Left ventricle myocardium superior (tissue), 1 donor: ENCODE measurements at regions of chr16 and their contacts with region 1.

Region 1: DNA sequence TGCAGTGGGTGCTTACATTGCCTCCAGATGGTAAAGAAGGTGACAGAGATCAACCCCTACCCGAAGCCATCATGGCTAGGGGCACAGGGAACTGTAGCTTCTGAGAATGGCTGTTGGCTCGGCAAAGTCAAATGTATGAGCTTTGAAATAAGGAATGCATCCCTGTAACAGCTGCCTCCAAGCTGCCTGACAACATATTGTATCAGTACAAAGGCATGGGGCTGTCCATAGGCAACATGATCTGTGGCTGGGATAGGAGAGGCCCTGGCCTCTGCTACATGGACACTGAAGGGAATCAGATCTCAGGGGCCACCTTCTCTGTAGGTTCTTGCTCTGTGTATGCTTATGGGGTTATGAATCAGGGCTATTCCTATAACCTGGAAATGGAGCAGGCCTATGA is 119.2 kb upstream of the NETO2 start:
- DNase-seq: no peak
- ATAC-seq: no peak

Region 2: DNA sequence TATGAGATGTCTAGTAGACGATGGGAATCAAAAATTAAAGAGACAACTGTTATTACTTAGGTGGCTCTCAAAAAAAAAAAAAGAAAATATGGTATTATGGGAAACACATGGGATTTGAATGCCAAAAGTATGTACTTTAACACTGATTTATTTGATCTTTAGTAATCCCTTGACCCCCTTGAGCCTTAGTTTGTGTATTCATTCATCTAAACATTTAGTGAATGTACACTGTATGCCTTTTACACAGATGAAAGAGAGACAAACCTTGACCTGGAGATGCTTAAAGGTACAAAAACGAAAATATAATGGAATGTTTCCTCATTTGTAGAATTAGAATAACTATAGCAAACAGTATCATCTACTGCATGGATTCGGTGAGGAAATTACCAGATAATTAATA is 80.6 kb before region 1 on chr16:
- intact Hi-C with region 1: no loop called
- DNase-seq: no peak
- ATAC-seq: no peak

Region 3: GRCh38 chr16:47308601-47309000 is 45.7 kb after region 1 on chr16:
- intact Hi-C with region 1: loop called (anchors 2 kb)
- DNase-seq: no peak
- ATAC-seq: peak; percentile 88

Region 4: GRCh38 chr16:47431960-47432359 is 169.0 kb after region 1 on chr16:
- intact Hi-C with region 1: no loop called
- DNase-seq: no peak
- ATAC-seq: no peak